WTC11 (cell line): ENCODE measurements at regions of chr11 and their contacts with region 1.

Region 1: GRCh38 chr11:64152841-64153691 is 12.8 kb downstream of the MACROD1 start:
- DNase-seq: peak; percentile 78
- ATAC-seq: peak; percentile 83
- H3K4me3 Mint-ChIP-seq: no peak overlapping the region
- H3K27ac Mint-ChIP-seq: no peak overlapping the region
- H3K4me1 Mint-ChIP-seq: peaks cover 30% of the 10 kb centered on the region
- H3K27me3 Mint-ChIP-seq: peaks cover 2% of the 10 kb centered on the region; the same call in 1 of the 2 replicates
- CTCF ChIP-seq: peak; percentile 99

Region 2: DNA sequence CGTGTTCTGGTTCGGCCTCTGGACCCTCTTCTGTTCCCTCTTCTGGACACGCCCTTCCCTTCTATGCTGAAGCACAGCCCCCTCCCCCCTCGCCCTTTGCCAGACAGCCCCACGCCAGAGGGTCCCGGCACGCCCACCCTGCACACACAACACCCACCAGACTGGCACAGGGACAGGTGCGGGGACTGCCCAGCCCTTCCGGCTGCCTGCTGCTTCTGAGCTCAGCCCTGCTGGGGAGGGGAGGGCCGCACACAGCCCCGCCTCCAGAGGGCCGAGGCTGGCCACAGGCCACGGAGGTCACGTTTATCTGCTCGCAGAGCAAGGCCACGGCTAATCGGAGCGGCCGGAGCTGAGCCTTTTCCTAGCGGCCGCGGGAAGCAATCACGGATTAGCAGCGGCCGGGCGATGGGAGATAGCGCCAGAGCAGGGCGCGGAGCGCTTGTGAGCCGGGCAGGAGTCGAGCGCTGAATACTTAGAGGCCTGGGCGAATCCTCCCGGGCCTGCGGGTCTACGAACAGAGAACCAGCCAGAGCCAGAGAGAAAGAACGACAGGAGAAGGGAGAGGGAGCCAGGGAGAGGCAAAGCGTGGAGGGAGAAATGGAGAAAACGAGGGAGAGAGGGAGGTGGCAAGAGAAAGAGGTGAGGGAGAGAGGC is 145.3 kb before region 1 on chr11:
- CTCF ChIA-PET with region 1: interaction called, 75 read pairs
- POLR2A ChIA-PET with region 1: no interaction called
- DNase-seq: peak; percentile 64
- ATAC-seq: peak; percentile 61
- H3K4me3 Mint-ChIP-seq: peak overlapping the region; percentile 69
- H3K27ac Mint-ChIP-seq: no peak overlapping the region
- H3K4me1 Mint-ChIP-seq: peaks cover 18% of the 10 kb centered on the region
- H3K27me3 Mint-ChIP-seq: peaks cover 100% of the 10 kb centered on the region
- CTCF ChIP-seq: no peak

Region 3: GRCh38 chr11:64036087-64037026 is 116.7 kb before region 1 on chr11:
- CTCF ChIA-PET with region 1: interaction called, 21 read pairs
- POLR2A ChIA-PET with region 1: no interaction called
- DNase-seq: no peak
- ATAC-seq: peak; percentile 2; the same call in 1 of the 2 replicates
- H3K4me3 Mint-ChIP-seq: peak overlapping the region; percentile 34
- H3K27ac Mint-ChIP-seq: no peak overlapping the region
- H3K4me1 Mint-ChIP-seq: peaks cover 14% of the 10 kb centered on the region
- H3K27me3 Mint-ChIP-seq: peaks cover 93% of the 10 kb centered on the region
- CTCF ChIP-seq: no peak

Region 4: DNA sequence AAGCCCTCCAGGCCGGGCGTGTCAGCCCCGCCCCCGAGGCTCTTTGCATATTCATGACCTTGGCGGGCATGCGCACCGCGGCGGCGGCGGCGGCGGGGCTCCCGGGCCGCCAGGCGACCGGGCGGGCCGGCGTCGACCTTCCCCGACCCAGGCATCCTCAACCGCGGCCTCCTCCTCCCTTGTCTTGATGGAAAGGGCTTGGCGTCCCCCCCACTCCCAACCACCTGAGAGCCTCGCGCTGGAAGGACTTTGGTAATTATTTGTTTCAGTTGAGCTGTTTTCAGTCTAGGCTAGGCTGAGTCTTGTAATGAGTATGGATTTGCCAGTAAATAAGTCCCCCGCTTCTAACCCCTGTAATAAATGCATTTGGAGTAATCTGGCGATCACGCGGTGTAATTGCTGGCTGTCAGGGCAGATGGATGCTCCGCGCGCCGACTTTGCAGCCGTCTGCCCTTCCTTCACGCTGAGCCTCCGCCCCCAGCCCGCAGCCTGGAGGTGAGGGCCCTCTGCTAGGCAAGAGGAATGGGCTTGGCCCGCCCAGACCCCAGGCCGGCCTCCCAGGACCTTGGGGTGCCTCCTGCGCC is 92.1 kb before region 1 on chr11:
- CTCF ChIA-PET with region 1: interaction called, 16 read pairs
- POLR2A ChIA-PET with region 1: no interaction called
- DNase-seq: peak; percentile 83
- ATAC-seq: peak; percentile 73
- H3K4me3 Mint-ChIP-seq: peak overlapping the region; percentile 74
- H3K27ac Mint-ChIP-seq: no peak overlapping the region
- H3K4me1 Mint-ChIP-seq: peaks cover 9% of the 10 kb centered on the region
- H3K27me3 Mint-ChIP-seq: peaks cover 98% of the 10 kb centered on the region
- CTCF ChIP-seq: no peak

Region 5: DNA sequence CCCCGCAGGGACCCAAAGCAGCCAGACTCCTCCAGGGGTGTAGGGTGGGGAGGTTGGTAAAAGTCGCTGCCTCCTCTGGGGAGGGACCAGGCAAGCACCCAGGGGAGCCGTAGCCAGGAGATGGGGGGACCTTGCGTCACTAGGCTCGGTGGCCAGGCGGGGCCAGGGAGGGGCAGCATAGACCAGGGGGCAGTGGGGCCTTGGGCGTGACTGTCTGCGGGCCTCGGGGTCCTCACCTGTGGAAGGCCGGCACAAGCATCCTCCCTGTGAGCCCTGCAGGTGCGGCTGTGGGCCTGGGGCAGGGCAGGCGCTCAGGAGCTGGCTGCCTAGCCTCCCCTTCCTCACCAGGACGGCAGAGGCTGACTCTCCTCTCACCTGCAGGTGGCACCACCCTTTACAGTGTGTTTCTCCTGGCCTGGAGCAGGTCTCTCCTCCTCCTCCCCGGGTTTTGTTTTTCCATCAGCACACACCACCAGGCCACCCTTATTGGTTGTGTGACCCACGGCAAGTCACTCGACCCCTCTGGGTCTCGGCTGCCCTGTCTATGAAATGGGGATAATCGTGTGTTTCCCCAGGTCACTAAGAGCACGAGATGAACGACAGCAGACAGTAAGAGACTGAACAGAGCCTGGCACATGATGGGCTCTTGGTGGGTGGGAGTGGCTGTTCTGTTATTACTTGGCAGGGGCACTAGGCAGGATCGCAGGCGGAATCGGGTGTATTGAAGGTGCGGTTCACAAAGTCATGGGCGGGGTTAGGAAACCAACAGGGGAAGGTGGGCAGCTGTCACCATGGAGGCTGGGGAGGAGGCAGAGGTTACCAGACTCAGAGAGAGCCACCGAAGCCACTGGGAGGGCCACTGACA is 64.7 kb before region 1 on chr11:
- CTCF ChIA-PET with region 1: interaction called, 23 read pairs
- POLR2A ChIA-PET with region 1: no interaction called
- DNase-seq: peak; percentile 79
- ATAC-seq: peak; percentile 93
- H3K4me3 Mint-ChIP-seq: no peak overlapping the region
- H3K27ac Mint-ChIP-seq: no peak overlapping the region
- H3K4me1 Mint-ChIP-seq: peaks cover 21% of the 10 kb centered on the region
- H3K27me3 Mint-ChIP-seq: peaks cover 32% of the 10 kb centered on the region
- CTCF ChIP-seq: no peak

Region 6: DNA sequence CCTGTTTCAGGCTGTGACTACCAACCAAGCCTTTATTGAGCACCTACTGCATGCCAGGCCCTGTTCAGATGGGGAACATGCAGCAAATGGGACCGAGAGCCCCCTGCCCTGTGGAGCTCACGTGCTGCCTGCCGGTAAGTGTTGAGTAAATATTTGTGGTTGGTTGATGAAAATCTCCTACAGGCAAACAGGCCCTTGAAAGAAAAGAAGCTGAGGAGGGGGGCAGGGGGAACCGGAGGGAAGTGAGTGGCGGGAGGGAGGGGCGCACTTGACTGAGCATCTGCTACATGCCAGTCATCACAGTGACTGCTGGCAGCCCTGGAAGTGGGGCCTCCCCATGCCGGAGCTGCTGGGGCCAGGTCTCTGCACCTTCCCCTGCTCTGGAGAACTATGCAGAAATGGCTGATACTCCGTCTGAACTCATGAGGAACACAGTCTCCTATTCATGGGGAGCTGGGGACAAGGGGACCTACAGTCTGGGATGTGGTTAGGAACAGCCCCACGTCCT is 21.3 kb before region 1 on chr11:
- CTCF ChIA-PET with region 1: interaction called, 17 read pairs
- POLR2A ChIA-PET with region 1: no interaction called
- DNase-seq: no peak
- ATAC-seq: no peak
- H3K4me3 Mint-ChIP-seq: no peak overlapping the region
- H3K27ac Mint-ChIP-seq: no peak overlapping the region
- H3K4me1 Mint-ChIP-seq: peaks cover 47% of the 10 kb centered on the region
- H3K27me3 Mint-ChIP-seq: peaks cover 39% of the 10 kb centered on the region
- CTCF ChIP-seq: no peak

Region 7: DNA sequence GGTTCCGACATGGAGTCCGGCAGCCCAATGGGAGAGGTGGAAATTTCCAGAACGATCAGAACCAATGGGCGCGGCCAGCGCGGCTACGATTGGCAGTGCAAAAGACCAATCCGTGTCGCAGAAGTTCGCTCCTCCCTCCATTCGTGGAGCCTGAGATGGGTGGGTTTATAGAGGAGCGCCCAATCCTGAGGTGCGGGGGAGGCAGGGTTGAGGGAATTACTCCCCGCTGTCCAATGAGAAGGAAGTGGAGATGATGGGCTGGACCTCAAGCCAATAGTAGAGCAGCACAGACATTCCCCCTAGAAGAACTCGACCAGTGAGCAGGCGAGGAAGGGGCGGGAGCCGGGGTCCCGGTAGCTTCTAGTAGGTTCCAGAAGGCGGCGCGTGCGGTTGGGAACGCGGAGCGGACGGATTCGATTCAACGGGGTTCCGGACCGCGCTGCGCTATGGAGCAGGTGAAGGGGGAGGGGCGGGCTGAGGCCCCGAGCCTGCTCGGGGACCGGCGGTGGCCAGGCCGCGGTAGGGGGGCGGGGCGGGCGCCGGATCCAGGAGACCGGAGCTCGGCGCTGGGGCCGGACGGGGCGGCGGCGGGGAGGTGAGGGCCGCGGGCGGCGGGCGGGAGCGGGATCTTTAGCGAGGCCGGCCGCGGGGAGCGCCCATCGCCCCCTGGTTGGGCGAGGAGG is 32.9 kb after region 1 on chr11 and contains the start of gene STIP1:
- CTCF ChIA-PET with region 1: interaction called, 14 read pairs
- POLR2A ChIA-PET with region 1: no interaction called
- DNase-seq: peak; percentile 98
- ATAC-seq: peak; percentile 92
- H3K4me3 Mint-ChIP-seq: peak within 1 kb of the TSS; percentile 93
- H3K27ac Mint-ChIP-seq: peak within 1 kb of the TSS; percentile 96
- H3K4me1 Mint-ChIP-seq: peaks cover 37% of the 10 kb centered on the region
- H3K27me3 Mint-ChIP-seq: no peaks in the 10 kb centered on the region
- CTCF ChIP-seq: no peak
- total RNA-seq, gene STIP1: 291 to 296 TPM (median 296 TPM) in 3 replicates

Region 8: DNA sequence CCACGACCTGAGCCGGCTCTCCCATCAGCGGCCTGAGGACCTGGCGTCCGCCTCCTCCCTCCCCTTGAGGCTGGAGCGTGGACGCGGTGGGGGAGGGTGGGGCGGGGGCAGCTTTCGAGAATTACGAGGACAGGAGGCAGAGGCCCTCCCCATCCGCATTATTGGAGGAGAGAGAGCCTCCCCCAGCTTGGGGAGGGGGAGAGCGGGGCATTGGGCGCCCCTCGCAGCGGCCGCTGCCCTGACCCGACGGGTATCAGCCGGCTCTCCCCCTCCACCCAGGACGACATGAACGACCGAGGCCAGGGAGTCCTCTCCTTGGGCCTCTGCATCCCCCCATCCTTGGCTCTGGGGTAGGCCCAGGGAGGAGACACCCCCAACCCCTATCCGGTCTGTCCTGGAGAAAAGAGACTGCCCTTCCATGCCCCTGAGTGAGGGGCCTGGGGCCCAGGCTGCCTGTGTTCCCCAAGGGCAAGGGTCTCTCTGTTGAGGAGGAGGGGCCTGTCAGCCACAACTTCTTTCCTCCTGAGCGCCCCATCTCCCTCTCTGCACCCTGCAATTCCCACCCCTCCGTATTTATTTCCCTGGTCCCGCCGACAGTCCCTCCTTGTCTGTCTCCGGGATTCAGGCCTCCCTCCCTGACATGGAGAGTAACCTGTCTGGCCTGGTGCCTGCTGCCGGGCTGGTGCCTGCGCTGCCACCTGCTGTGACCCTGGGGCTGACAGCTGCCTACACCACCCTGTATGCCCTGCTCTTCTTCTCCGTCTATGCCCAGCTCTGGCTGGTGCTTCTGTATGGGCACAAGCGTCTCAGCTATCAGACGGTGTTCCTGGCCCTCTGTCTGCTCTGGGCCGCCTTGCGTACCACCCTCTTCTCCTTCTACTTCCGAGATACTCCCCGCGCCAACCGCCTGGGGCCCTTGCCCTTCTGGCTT is 133.1 kb after region 1 on chr11:
- CTCF ChIA-PET with region 1: no interaction called
- POLR2A ChIA-PET with region 1: no interaction called
- DNase-seq: no peak
- ATAC-seq: no peak
- H3K4me3 Mint-ChIP-seq: peak overlapping the region; percentile 76
- H3K27ac Mint-ChIP-seq: no peak overlapping the region; the same call in 1 of the 2 replicates
- H3K4me1 Mint-ChIP-seq: peaks cover 12% of the 10 kb centered on the region
- H3K27me3 Mint-ChIP-seq: peaks cover 27% of the 10 kb centered on the region
- CTCF ChIP-seq: no peak